ENCODE measurements at regions of chr1 and their contacts with region 1.

Region 1: GRCh38 chr1:240027059-240027462 is 64.6 kb upstream of the FMN2 start:
- DNase-seq: peak; percentile 84
- ATAC-seq: peak; percentile 60
- H3K4me3 ChIP-seq: no peak overlapping the region
- H3K27ac ChIP-seq: no peak overlapping the region
- H3K4me1 ChIP-seq: peaks cover 30% of the 10 kb centered on the region
- H3K27me3 ChIP-seq: no peaks in the 10 kb centered on the region
- CTCF ChIP-seq: peak; percentile 99

Region 2: GRCh38 chr1:240092301-240093119 is 65.4 kb after region 1 on chr1:
- CTCF ChIA-PET with region 1: interaction called, 3 read pairs
- POLR2A ChIA-PET with region 1: interaction called, 3 read pairs
- intact Hi-C with region 1: loop called (anchors 2 kb)
- DNase-seq: peak; percentile 60
- ATAC-seq: peak; percentile 42
- H3K4me3 ChIP-seq: peak overlapping the region; percentile 92
- H3K27ac ChIP-seq: no peak overlapping the region
- H3K4me1 ChIP-seq: peaks cover 64% of the 10 kb centered on the region
- H3K27me3 ChIP-seq: no peaks in the 10 kb centered on the region
- CTCF ChIP-seq: peak; percentile 61

Region 3: GRCh38 chr1:240149484-240150094 is 122.5 kb after region 1 on chr1:
- CTCF ChIA-PET with region 1: interaction called, 4 read pairs
- POLR2A ChIA-PET with region 1: no interaction called
- intact Hi-C with region 1: loop called (anchors 1 kb)
- DNase-seq: peak; percentile 82
- ATAC-seq: peak; percentile 75
- H3K4me3 ChIP-seq: no peak overlapping the region
- H3K27ac ChIP-seq: no peak overlapping the region
- H3K4me1 ChIP-seq: peaks cover 9% of the 10 kb centered on the region
- H3K27me3 ChIP-seq: no peaks in the 10 kb centered on the region
- CTCF ChIP-seq: peak; percentile 91

Region 4: GRCh38 chr1:240169188-240169587 is 142.1 kb after region 1 on chr1:
- CTCF ChIA-PET with region 1: no interaction called
- POLR2A ChIA-PET with region 1: no interaction called
- intact Hi-C with region 1: loop called (anchors 1 kb)
- DNase-seq: peak; percentile 69
- ATAC-seq: peak; percentile 64; the same call in 1 of the 2 replicates
- H3K4me3 ChIP-seq: no peak overlapping the region
- H3K27ac ChIP-seq: no peak overlapping the region
- H3K4me1 ChIP-seq: no peaks in the 10 kb centered on the region
- H3K27me3 ChIP-seq: no peaks in the 10 kb centered on the region
- CTCF ChIP-seq: peak; percentile 73

Region 5: DNA sequence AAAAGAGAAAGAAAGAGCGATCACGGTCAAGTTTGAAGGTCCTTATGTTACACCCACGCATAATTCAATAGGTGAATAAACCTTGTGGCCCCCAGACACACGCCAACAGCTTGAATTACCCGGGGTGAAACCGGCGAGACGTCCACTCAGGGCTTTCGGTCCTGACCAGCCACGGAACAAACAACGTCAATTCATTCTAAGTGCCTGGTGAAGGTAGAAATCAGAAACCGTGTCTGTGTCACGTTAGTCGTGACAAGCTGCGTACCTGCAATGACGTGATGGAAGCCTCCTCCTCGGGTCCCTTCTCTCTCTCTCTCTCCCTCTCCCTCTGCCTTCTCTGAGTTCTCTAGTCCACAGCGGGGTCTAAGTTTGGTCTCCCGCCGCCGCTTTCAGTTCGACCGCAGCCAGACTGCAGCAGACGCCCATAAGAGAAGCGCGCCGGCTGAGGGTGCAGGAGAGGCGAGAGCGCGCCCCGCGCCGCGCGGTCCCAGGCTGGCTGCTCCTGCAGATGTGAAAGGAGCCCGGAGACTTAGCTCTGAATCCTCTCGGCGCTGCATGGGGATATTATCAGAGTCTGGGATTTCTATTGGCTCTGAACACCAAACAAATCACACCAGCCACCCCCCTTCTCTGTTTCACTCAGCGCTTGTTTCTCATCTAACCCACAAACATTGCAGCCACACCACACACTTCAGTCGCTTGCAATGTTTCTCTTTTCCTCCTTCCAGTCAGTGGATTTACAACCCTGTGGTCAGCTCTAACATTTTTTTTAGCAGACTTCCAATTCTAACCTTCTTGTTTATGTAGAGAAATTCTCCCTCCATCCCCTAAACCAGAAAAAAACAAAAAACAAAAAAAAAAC is 584.8 kb after region 1 on chr1 and contains the start of gene GREM2:
- CTCF ChIA-PET with region 1: no interaction called
- POLR2A ChIA-PET with region 1: no interaction called
- intact Hi-C with region 1: loop called (anchors 2 kb)
- DNase-seq: peak; percentile 40
- ATAC-seq: peak; percentile 75
- H3K4me3 ChIP-seq: peak within 1 kb of the TSS; percentile 68
- H3K27ac ChIP-seq: no peak within 1 kb of the TSS
- H3K4me1 ChIP-seq: peaks cover 10% of the 10 kb centered on the region; the same call in 1 of the 2 replicates
- H3K27me3 ChIP-seq: peaks cover 72% of the 10 kb centered on the region
- CTCF ChIP-seq: no peak
- total RNA-seq, gene GREM2: not detected in 2 replicates